PC-3 (cell line): ENCODE measurements at regions of chr1 and their contacts with region 1.

Region 1: DNA sequence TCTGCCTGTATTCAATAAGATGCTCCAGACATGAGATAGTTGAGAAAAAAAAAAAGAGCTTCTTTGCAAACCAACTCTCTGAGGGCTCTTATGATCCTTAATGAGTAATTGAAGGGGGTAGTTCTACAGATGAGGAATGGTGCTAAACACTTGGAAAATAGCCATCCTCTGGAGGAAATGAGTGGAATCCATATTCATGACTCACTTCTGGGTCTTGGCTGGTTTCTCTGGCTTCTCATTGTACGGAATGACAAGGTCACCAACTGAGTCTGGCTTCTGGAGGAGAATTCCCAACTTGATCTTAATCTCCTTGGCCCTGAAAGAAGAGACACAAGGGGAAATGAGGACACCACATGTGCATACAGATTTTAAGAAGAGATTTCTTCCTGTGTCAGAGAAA is 34.7 kb downstream of the RGS5 start:
- DNase-seq: peak; percentile 97
- ATAC-seq: peak; percentile 39
- H3K4me3 ChIP-seq: no peak overlapping the region
- H3K27ac ChIP-seq: peak overlapping the region; percentile 67
- H3K4me1 ChIP-seq: peaks cover 78% of the 10 kb centered on the region
- H3K27me3 ChIP-seq: no peaks in the 10 kb centered on the region
- CTCF ChIP-seq: no peak

Region 2: GRCh38 chr1:163090321-163090945 is 77.6 kb before region 1 on chr1:
- CTCF ChIA-PET with region 1: interaction called, 3 read pairs
- POLR2A ChIA-PET with region 1: no interaction called
- intact Hi-C with region 1: loop called (anchors 5 kb)
- DNase-seq: peak; percentile 80
- ATAC-seq: peak; percentile 93
- H3K4me3 ChIP-seq: no peak overlapping the region
- H3K27ac ChIP-seq: peak overlapping the region; percentile 47
- H3K4me1 ChIP-seq: peaks cover 33% of the 10 kb centered on the region
- H3K27me3 ChIP-seq: no peaks in the 10 kb centered on the region
- CTCF ChIP-seq: no peak

Region 3: DNA sequence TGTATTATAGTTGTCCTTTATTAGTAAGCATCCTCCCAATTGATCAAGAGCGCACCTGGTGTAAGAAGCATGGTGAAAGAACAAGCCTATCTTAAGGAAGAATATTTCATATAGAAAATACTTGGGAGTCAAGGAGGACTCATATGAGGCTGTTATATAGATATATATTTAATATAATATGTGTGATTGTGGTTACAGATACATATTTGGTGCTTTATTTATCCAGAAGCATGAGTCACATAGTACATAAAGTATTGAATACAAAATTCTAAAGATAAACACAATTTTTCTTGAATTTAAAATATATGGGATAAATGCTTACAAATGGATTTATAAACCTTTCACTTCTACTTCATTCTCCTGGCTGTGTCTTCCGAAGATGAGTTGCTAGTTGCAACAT is 25.9 kb before region 1 on chr1:
- CTCF ChIA-PET with region 1: no interaction called
- POLR2A ChIA-PET with region 1: no interaction called
- intact Hi-C with region 1: loop called (anchors 1 kb)
- DNase-seq: peak; percentile 57
- ATAC-seq: peak; percentile 98
- H3K4me3 ChIP-seq: no peak overlapping the region
- H3K27ac ChIP-seq: peak overlapping the region; percentile 36
- H3K4me1 ChIP-seq: peaks cover 14% of the 10 kb centered on the region
- H3K27me3 ChIP-seq: no peaks in the 10 kb centered on the region
- CTCF ChIP-seq: no peak

Region 4: DNA sequence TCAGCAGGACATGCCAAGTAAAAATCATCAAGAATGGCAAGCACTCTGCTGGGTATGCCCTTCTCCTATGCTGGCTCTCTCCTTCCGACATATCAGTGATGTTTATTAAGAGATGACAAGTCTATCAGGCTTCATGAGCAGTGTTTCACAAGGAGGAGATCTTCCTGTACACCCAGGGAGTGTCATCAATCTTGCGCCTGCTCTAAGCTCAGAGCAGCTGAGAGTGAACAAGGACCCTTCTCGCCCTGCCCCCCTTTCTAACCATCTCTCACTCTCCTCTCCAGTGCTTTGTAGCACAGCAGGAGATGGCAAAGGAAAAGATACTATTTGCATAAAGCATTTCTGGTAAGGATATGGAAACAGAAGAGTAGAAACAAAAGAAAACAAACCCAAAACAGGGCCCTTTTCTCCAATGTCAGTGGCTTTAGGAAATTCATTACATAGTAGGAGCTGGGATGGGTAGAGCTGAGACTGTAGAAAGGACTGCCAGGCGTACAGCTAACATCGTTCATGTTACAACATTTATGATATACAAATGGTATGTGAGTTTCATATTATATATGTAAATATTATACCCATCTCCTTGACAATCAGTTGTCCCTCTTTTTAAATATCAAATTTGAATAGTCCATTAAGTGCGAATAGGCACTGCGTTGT is 355.4 kb after region 1 on chr1:
- CTCF ChIA-PET with region 1: no interaction called
- POLR2A ChIA-PET with region 1: no interaction called
- intact Hi-C with region 1: no loop called
- DNase-seq: no peak
- ATAC-seq: no peak
- H3K4me3 ChIP-seq: no peak overlapping the region
- H3K27ac ChIP-seq: no peak overlapping the region
- H3K4me1 ChIP-seq: no peaks in the 10 kb centered on the region
- H3K27me3 ChIP-seq: peaks cover 30% of the 10 kb centered on the region
- CTCF ChIP-seq: no peak